B cell (primary cell): ENCODE measurements at regions of chr17 and their contacts with region 1.

Region 1: GRCh38 chr17:48335858-48336500 is 94.0 kb downstream of the SKAP1 start:
- DNase-seq: peak; percentile 79
- ATAC-seq: peak; percentile 47
- H3K4me3 ChIP-seq: no peak overlapping the region
- H3K4me3 Mint-ChIP-seq: no peak overlapping the region
- H3K27ac ChIP-seq: no peak overlapping the region
- H3K27ac Mint-ChIP-seq: no peak overlapping the region
- H3K4me1 ChIP-seq: no peaks in the 10 kb centered on the region
- H3K4me1 Mint-ChIP-seq: no peaks in the 10 kb centered on the region
- H3K27me3 ChIP-seq: no peaks in the 10 kb centered on the region
- H3K27me3 Mint-ChIP-seq: peaks cover 4% of the 10 kb centered on the region
- CTCF ChIP-seq: peak; percentile 91

Region 2: DNA sequence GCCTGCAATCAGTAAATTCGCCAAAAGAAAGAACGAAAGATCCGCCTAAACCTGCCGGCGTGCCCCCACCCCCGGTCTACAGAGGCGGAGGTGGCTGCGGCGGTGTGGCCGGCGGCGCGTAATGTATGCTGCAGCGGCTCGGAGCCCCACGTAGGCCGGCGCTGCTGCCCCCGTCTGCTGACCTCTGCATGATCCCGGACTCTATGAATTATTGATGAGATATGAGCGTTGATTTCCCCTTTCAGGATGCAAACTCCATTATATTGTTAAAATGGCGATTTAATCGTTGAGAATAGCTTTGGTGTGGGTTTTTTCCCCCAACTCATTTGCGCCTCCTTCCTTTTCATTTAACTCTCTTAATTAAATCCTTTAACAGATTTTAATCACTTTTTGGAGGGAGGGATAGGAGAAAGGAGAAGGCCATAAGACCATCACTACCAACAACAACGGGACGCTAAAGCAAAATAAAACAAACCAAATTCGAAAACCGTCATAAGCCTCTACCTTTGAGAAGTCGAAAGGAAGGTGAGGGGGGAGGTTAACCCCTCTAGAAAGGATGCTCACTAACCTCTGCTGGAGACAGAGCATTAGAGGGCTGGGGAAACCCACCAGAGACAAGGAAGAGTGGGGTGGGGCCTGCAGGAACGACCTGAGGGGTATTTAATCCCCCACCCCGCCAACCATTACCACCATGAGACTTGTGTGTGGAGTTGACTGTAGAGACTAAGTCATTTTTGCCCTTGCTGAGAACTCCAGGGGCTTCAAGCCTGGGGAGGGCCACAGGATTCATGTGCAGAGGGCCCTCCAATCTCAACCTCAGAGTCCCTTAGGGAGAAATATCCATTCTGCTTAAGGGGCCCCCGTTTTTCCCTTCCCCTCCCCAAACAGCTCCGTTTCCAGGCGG is 250.6 kb after region 1 on chr17:
- CTCF ChIA-PET with region 1: interaction called, 64 read pairs
- POLR2A ChIA-PET with region 1: no interaction called
- intact Hi-C with region 1: no loop called
- DNase-seq: peak; percentile 61
- ATAC-seq: no peak
- H3K4me3 ChIP-seq: peak overlapping the region in 3 of 5 experiments; percentile 59 to 64 (median 59)
- H3K4me3 Mint-ChIP-seq: peak overlapping the region; percentile 97
- H3K27ac ChIP-seq: no peak overlapping the region
- H3K27ac Mint-ChIP-seq: no peak overlapping the region
- H3K4me1 ChIP-seq: peaks cover 43 to 57% of the 10 kb centered on the region in 2 donors
- H3K4me1 Mint-ChIP-seq: peaks cover 39% of the 10 kb centered on the region
- H3K27me3 ChIP-seq: peaks cover 0 to 99% (median 89%) of the 10 kb centered on the region in 4 experiments
- H3K27me3 Mint-ChIP-seq: peaks cover 93% of the 10 kb centered on the region
- CTCF ChIP-seq: no peak

Region 3: GRCh38 chr17:48618256-48618897 is 282.4 kb after region 1 on chr17:
- CTCF ChIA-PET with region 1: interaction called, 24 read pairs
- POLR2A ChIA-PET with region 1: no interaction called
- intact Hi-C with region 1: loop called (anchors 1 kb)
- DNase-seq: peak; percentile 87
- ATAC-seq: peak; percentile 71
- H3K4me3 ChIP-seq: no peak overlapping the region
- H3K4me3 Mint-ChIP-seq: no peak overlapping the region
- H3K27ac ChIP-seq: no peak overlapping the region
- H3K27ac Mint-ChIP-seq: peak overlapping the region; percentile 74
- H3K4me1 ChIP-seq: peaks cover 33 to 51% of the 10 kb centered on the region in 2 donors
- H3K4me1 Mint-ChIP-seq: peaks cover 28% of the 10 kb centered on the region
- H3K27me3 ChIP-seq: peaks cover 0 to 97% (median 72%) of the 10 kb centered on the region in 4 experiments
- H3K27me3 Mint-ChIP-seq: peaks cover 86% of the 10 kb centered on the region
- CTCF ChIP-seq: peak; percentile 97